B cell (primary cell): ENCODE measurements at regions of chr10 and their contacts with region 1.

Region 1: GRCh38 chr10:68301790-68302502 is 29.9 kb upstream of the HNRNPH3 start:
- DNase-seq: peak; percentile 68
- ATAC-seq: peak; percentile 64
- H3K4me3 ChIP-seq: no peak overlapping the region
- H3K4me3 Mint-ChIP-seq: peak overlapping the region; percentile 75
- H3K27ac ChIP-seq: no peak overlapping the region
- H3K27ac Mint-ChIP-seq: peak overlapping the region; percentile 91
- H3K4me1 ChIP-seq: peaks cover 24 to 26% of the 10 kb centered on the region in 2 donors
- H3K4me1 Mint-ChIP-seq: peaks cover 30% of the 10 kb centered on the region
- H3K27me3 ChIP-seq: no peaks in the 10 kb centered on the region
- H3K27me3 Mint-ChIP-seq: no peaks in the 10 kb centered on the region
- CTCF ChIP-seq: peak; percentile 74

Region 2: GRCh38 chr10:67788025-67788886 is 513.7 kb before region 1 on chr10:
- CTCF ChIA-PET with region 1: interaction called, 66 read pairs
- POLR2A ChIA-PET with region 1: no interaction called
- intact Hi-C with region 1: loop called (anchors 1 kb)
- DNase-seq: peak; percentile 70
- ATAC-seq: peak; percentile 72
- H3K4me3 ChIP-seq: no peak overlapping the region
- H3K4me3 Mint-ChIP-seq: peak overlapping the region; percentile 32
- H3K27ac ChIP-seq: no peak overlapping the region
- H3K27ac Mint-ChIP-seq: no peak overlapping the region
- H3K4me1 ChIP-seq: peaks cover 20 to 25% of the 10 kb centered on the region in 2 donors
- H3K4me1 Mint-ChIP-seq: peaks cover 24% of the 10 kb centered on the region
- H3K27me3 ChIP-seq: peaks cover 0 to 3% (median 0%) of the 10 kb centered on the region in 4 experiments
- H3K27me3 Mint-ChIP-seq: peaks cover 3% of the 10 kb centered on the region
- CTCF ChIP-seq: peak; percentile 68

Region 3: DNA sequence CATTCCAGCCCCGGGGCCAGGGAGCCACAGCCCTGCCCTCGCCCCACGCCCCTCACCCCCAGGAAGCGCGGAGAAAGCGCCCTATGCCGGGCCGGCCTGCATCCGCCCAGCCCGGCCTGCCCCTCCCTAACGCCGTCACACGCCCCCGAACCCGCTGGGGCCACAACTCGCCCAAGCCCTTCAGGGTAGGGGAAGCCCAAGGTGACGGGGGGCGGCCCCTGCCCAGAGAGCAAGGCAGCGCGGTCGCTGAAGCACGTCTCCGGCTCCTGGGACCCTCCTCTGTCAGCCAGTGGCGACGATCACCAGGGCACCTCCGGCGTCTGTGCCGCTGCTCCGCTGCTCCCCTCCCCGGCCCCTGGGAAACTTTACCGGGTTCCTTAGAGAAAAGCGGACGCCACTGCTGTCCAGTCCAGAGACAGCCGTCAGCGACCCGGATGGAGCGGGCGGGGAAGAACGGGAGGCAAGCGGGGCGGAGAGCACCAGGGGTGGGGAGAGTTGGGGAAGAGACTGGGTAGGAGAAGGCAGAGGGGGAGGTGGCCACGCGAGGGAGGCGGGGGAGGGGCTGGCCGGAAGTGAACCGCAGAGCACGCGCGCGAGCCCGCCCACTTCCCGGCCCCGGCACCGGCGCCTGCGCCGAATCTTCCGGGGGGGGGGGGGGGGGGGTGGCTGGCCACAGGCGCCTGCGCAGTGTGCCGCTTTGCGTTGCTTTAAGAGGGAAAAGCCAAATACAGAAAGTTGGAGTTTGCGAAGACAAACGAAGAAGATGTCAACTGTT is 227.0 kb before region 1 on chr10 and contains the start of gene HERC4:
- CTCF ChIA-PET with region 1: interaction called, 4 read pairs
- POLR2A ChIA-PET with region 1: interaction called, 4 read pairs
- intact Hi-C with region 1: loop called (anchors 1 kb)
- DNase-seq: peak; percentile 96
- ATAC-seq: peak; percentile 88
- H3K4me3 ChIP-seq: peak within 1 kb of the TSS; percentile 83 to 95 (median 90)
- H3K4me3 Mint-ChIP-seq: peak within 1 kb of the TSS; percentile 95
- H3K27ac ChIP-seq: peak within 1 kb of the TSS; percentile 99 to 100
- H3K27ac Mint-ChIP-seq: peak within 1 kb of the TSS; percentile 98
- H3K4me1 ChIP-seq: peaks cover 13 to 33% of the 10 kb centered on the region in 2 donors
- H3K4me1 Mint-ChIP-seq: peaks cover 38% of the 10 kb centered on the region
- H3K27me3 ChIP-seq: no peaks in the 10 kb centered on the region
- H3K27me3 Mint-ChIP-seq: no peaks in the 10 kb centered on the region
- CTCF ChIP-seq: no peak
- total RNA-seq, gene HERC4: 118 and 126 TPM in 2 replicates

Region 4: DNA sequence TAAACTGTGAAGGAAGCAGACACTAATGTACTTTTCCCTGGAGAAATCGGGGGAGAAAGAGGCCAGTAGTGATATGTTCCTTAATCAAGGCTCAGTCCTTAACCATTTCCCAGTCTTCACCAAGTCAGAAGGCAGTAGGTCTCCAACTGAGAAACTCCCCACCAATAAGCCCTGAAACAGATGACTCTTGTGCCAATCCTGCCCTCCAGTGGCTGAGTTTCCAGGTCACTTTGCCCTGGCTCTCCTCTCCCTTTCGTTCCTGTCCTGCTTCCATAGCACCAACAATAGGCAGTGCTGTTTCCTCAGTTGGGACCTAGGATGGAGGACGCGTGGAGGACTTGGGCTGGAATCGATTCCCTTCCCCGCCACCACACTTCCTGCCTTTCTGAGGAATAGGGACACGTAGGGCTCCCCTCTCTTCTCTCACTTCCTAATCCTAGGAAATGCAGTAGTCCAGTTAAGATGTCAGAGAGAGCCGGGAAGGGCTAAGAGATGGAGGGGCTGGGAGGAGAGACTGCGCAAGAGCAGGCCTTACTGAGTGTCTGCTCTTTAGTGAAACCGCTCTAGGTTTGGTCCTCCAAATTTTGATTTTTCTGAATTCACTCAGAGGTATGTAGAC is 93.4 kb before region 1 on chr10:
- CTCF ChIA-PET with region 1: interaction called, 224 read pairs
- POLR2A ChIA-PET with region 1: interaction called, 3 read pairs
- intact Hi-C with region 1: loop called (anchors 1 kb)
- DNase-seq: no peak
- ATAC-seq: no peak
- H3K4me3 ChIP-seq: no peak overlapping the region
- H3K4me3 Mint-ChIP-seq: no peak overlapping the region
- H3K27ac ChIP-seq: no peak overlapping the region
- H3K27ac Mint-ChIP-seq: no peak overlapping the region
- H3K4me1 ChIP-seq: no peaks in the 10 kb centered on the region
- H3K4me1 Mint-ChIP-seq: no peaks in the 10 kb centered on the region
- H3K27me3 ChIP-seq: no peaks in the 10 kb centered on the region
- H3K27me3 Mint-ChIP-seq: peaks cover 17% of the 10 kb centered on the region
- CTCF ChIP-seq: no peak

Region 5: DNA sequence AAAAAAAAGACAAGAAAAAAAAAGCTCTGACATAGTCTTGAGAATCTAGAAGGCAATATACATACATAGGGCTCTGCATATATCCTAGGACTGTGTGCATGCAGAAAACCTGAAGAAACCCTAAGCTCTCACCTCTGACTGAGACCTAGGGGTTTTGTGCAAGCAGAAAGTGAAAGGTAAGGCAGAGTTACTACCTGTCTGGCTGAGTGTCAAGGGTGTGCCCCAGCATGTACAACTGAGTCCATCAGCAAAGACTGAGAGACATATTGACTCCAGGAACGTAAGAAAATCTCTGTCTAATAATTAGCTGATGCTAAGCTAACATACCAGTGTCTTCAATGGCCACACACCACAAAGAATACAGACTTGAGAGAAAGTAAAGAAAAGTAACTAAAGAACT is 13.6 kb after region 1 on chr10:
- CTCF ChIA-PET with region 1: interaction called, 34 read pairs
- POLR2A ChIA-PET with region 1: no interaction called
- intact Hi-C with region 1: no loop called
- DNase-seq: no peak
- ATAC-seq: no peak
- H3K4me3 ChIP-seq: no peak overlapping the region
- H3K4me3 Mint-ChIP-seq: no peak overlapping the region
- H3K27ac ChIP-seq: no peak overlapping the region
- H3K27ac Mint-ChIP-seq: no peak overlapping the region
- H3K4me1 ChIP-seq: no peaks in the 10 kb centered on the region
- H3K4me1 Mint-ChIP-seq: peaks cover 2% of the 10 kb centered on the region
- H3K27me3 ChIP-seq: peaks cover 0 to 2% (median 0%) of the 10 kb centered on the region in 4 experiments
- H3K27me3 Mint-ChIP-seq: no peaks in the 10 kb centered on the region
- CTCF ChIP-seq: no peak

Region 6: GRCh38 chr10:68837608-68838322 is 535.8 kb after region 1 on chr10:
- CTCF ChIA-PET with region 1: no interaction called
- POLR2A ChIA-PET with region 1: no interaction called
- intact Hi-C with region 1: no loop called
- DNase-seq: no peak
- ATAC-seq: no peak
- H3K4me3 ChIP-seq: no peak overlapping the region
- H3K4me3 Mint-ChIP-seq: no peak overlapping the region
- H3K27ac ChIP-seq: no peak overlapping the region
- H3K27ac Mint-ChIP-seq: no peak overlapping the region
- H3K4me1 ChIP-seq: no peaks in the 10 kb centered on the region
- H3K4me1 Mint-ChIP-seq: no peaks in the 10 kb centered on the region
- H3K27me3 ChIP-seq: no peaks in the 10 kb centered on the region
- H3K27me3 Mint-ChIP-seq: no peaks in the 10 kb centered on the region
- CTCF ChIP-seq: no peak